ENCODE measurements at regions of chr3 and their contacts with region 1.

Region 1: DNA sequence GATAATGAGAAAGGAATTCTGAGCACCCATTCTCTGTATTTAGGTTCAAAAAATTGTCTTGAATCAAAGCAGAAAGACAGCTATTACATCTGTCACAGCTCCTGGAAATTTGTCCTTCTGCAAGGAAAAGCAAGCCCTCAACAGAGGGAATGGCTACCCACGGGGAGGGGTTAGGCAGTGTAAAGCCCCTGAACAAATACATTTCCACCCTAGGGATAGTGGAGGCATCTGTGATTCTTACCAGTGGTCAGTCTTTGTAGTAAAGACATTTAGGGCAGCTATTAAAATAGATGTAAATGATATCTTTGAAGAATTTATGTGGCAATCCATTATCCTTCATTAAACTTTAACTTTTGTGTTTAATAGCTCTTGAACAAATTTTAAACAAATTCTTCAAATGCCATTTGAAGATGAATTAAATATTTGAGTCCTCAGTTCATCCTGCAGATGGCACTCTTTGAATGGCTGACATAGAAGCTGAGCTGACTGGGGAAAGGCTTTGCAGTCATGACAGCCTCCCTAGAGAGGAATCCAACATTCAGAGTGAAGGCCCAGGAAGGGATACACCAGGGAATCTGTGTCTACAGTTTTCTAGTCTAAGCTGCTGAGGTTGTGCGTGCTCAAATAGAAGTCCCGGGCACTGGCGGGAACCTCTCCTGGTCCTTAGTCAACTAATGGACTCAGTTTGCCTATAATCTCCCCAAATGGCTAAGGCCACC is 359.7 kb upstream of the ROPN1 start:
- DNase-seq: peak; percentile 31
- ATAC-seq: peak; percentile 84
- H3K4me3 ChIP-seq: no peak overlapping the region
- H3K27ac ChIP-seq: no peak overlapping the region
- H3K4me1 ChIP-seq: no peaks in the 10 kb centered on the region
- H3K27me3 ChIP-seq: peaks cover 40% of the 10 kb centered on the region
- CTCF ChIP-seq: peak; percentile 31 to 62 (median 59); a peak in 5 of 6 replicates
- POLR2A ChIP-seq: no peak
- RAD21 ChIP-seq: peak; percentile 74

Region 2: GRCh38 chr3:123431658-123432324 is 919.8 kb before region 1 on chr3:
- CTCF ChIA-PET with region 1: no interaction called
- POLR2A ChIA-PET with region 1: no interaction called
- RAD21 ChIA-PET with region 1: no interaction called
- intact Hi-C with region 1: no loop called
- DNase-seq: no peak
- ATAC-seq: no peak
- H3K4me3 ChIP-seq: no peak overlapping the region
- H3K27ac ChIP-seq: no peak overlapping the region
- H3K4me1 ChIP-seq: no peaks in the 10 kb centered on the region
- H3K27me3 ChIP-seq: peaks cover 16% of the 10 kb centered on the region
- CTCF ChIP-seq: no peak
- POLR2A ChIP-seq: no peak
- RAD21 ChIP-seq: no peak

Region 3: GRCh38 chr3:124467980-124468902 is 116.7 kb after region 1 on chr3:
- CTCF ChIA-PET with region 1: interaction called, 33 read pairs
- POLR2A ChIA-PET with region 1: interaction called, 3 read pairs
- RAD21 ChIA-PET with region 1: no interaction called
- intact Hi-C with region 1: loop called (anchors 1 kb)
- DNase-seq: peak; percentile 26
- ATAC-seq: peak; percentile 99
- H3K4me3 ChIP-seq: no peak overlapping the region
- H3K27ac ChIP-seq: no peak overlapping the region
- H3K4me1 ChIP-seq: no peaks in the 10 kb centered on the region
- H3K27me3 ChIP-seq: peaks cover 68% of the 10 kb centered on the region
- CTCF ChIP-seq: peak; percentile 77 to 98 (median 98)
- POLR2A ChIP-seq: no peak
- RAD21 ChIP-seq: peak; percentile 91

Region 4: GRCh38 chr3:124552239-124552638 is 200.7 kb after region 1 on chr3:
- CTCF ChIA-PET with region 1: interaction called, 11 read pairs
- POLR2A ChIA-PET with region 1: no interaction called
- RAD21 ChIA-PET with region 1: no interaction called
- intact Hi-C with region 1: loop called (anchors 1 kb)
- DNase-seq: no peak
- ATAC-seq: no peak
- H3K4me3 ChIP-seq: no peak overlapping the region
- H3K27ac ChIP-seq: no peak overlapping the region
- H3K4me1 ChIP-seq: peaks cover 0 to 3% of the 10 kb centered on the region in 2 experiments; a peak in 1 of 4 replicates
- H3K27me3 ChIP-seq: peaks cover 35% of the 10 kb centered on the region
- CTCF ChIP-seq: no peak
- POLR2A ChIP-seq: no peak
- RAD21 ChIP-seq: no peak

Region 5: GRCh38 chr3:126226374-126226773 is 1874.8 kb after region 1 on chr3:
- CTCF ChIA-PET with region 1: no interaction called
- POLR2A ChIA-PET with region 1: no interaction called
- RAD21 ChIA-PET with region 1: no interaction called
- intact Hi-C with region 1: no loop called
- DNase-seq: no peak
- ATAC-seq: no peak
- H3K4me3 ChIP-seq: no peak overlapping the region
- H3K27ac ChIP-seq: no peak overlapping the region
- H3K4me1 ChIP-seq: no peaks in the 10 kb centered on the region
- H3K27me3 ChIP-seq: no peaks in the 10 kb centered on the region
- CTCF ChIP-seq: no peak
- POLR2A ChIP-seq: no peak
- RAD21 ChIP-seq: no peak